ENCODE measurements at regions of chr10 and their contacts with region 1.

Region 1: GRCh38 chr10:61943674-61944410 is 42.3 kb downstream of the ARID5B start:
- DNase-seq: peak in 4 of 5 donors; percentile 56 to 68 (median 60)
- H3K4me3 ChIP-seq: peak overlapping the region in 1 of 2 donors; percentile 25
- H3K4me3 Mint-ChIP-seq: peak overlapping the region; percentile 72 to 91 (median 84)
- H3K27ac ChIP-seq: peak overlapping the region; percentile 56
- H3K27ac Mint-ChIP-seq: peak overlapping the region; percentile 89 to 98 (median 95)
- H3K4me1 ChIP-seq: peaks cover 64% of the 10 kb centered on the region
- H3K4me1 Mint-ChIP-seq: peaks cover 35 to 61% (median 48%) of the 10 kb centered on the region in 4 donors
- H3K27me3 ChIP-seq: no peaks in the 10 kb centered on the region
- H3K27me3 Mint-ChIP-seq: no peaks in the 10 kb centered on the region

Region 2: GRCh38 chr10:61733358-61733940 is 210.4 kb before region 1 on chr10:
- CTCF ChIA-PET with region 1: no interaction called
- POLR2A ChIA-PET with region 1: no interaction called
- intact Hi-C with region 1: no loop called
- DNase-seq: peak in 4 of 5 donors; percentile 4 to 11 (median 8)
- H3K4me3 ChIP-seq: no peak overlapping the region
- H3K4me3 Mint-ChIP-seq: no peak overlapping the region
- H3K27ac ChIP-seq: no peak overlapping the region
- H3K27ac Mint-ChIP-seq: no peak overlapping the region
- H3K4me1 ChIP-seq: no peaks in the 10 kb centered on the region
- H3K4me1 Mint-ChIP-seq: no peaks in the 10 kb centered on the region
- H3K27me3 ChIP-seq: peaks cover 13% of the 10 kb centered on the region
- H3K27me3 Mint-ChIP-seq: peaks cover 26 to 29% of the 10 kb centered on the region in 2 donors

Region 3: GRCh38 chr10:61961278-61961677 is 17.4 kb after region 1 on chr10:
- CTCF ChIA-PET with region 1: interaction called, 4 read pairs
- POLR2A ChIA-PET with region 1: interaction called, 15 read pairs
- intact Hi-C with region 1: no loop called
- DNase-seq: peak; percentile 46 to 54 (median 51)
- H3K4me3 ChIP-seq: no peak overlapping the region
- H3K4me3 Mint-ChIP-seq: peak overlapping the region in 7 of 8 donors; percentile 42 to 73 (median 53)
- H3K27ac ChIP-seq: no peak overlapping the region
- H3K27ac Mint-ChIP-seq: peak overlapping the region; percentile 78 to 95 (median 85)
- H3K4me1 ChIP-seq: peaks cover 68% of the 10 kb centered on the region
- H3K4me1 Mint-ChIP-seq: peaks cover 54 to 67% (median 61%) of the 10 kb centered on the region in 4 donors
- H3K27me3 ChIP-seq: no peaks in the 10 kb centered on the region
- H3K27me3 Mint-ChIP-seq: no peaks in the 10 kb centered on the region

Region 4: GRCh38 chr10:61992671-61993668 is 49.1 kb after region 1 on chr10:
- CTCF ChIA-PET with region 1: interaction called, 4 read pairs
- POLR2A ChIA-PET with region 1: interaction called, 20 read pairs
- intact Hi-C with region 1: loop called (anchors 1 kb)
- DNase-seq: peak; percentile 79 to 88 (median 84)
- H3K4me3 ChIP-seq: peak overlapping the region; percentile 9 to 39
- H3K4me3 Mint-ChIP-seq: peak overlapping the region; percentile 47 to 81 (median 74)
- H3K27ac ChIP-seq: peak overlapping the region; percentile 60
- H3K27ac Mint-ChIP-seq: peak overlapping the region; percentile 87 to 98 (median 94)
- H3K4me1 ChIP-seq: peaks cover 71% of the 10 kb centered on the region
- H3K4me1 Mint-ChIP-seq: peaks cover 52 to 72% (median 56%) of the 10 kb centered on the region in 4 donors
- H3K27me3 ChIP-seq: no peaks in the 10 kb centered on the region
- H3K27me3 Mint-ChIP-seq: peaks cover 0 to 3% of the 10 kb centered on the region in 2 donors

Region 5: DNA sequence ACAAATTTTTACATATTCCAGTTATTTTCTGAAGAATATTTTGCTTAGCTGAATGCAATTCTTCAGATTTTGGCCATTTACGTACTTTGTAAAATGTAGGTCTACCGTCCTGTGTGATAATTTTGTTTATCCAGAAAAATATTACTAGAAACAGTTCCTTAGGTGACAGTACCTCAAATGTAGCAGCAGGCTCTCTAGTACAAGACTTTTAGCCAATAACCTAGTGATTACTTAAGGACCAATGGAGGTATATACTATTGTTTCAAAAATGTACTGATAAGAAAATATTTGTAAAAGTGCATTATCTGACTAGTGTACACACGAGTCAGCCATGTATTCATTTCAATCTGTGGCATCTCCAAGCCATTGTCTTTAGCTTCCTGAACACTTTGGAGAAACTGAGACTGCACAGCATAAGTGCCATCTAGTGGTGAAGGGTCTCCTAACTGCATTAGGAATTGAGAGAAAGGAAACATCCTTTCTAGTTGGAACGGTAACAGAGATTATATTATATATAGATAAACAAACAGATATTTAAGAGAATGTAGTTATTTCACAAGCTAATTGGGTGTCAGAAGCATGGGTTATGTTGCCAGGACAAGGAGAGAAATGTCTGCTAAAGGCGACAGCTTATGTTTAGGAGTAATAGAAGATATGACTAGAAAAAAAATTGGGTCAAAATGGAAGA is 301.1 kb after region 1 on chr10:
- CTCF ChIA-PET with region 1: interaction called, 8 read pairs
- POLR2A ChIA-PET with region 1: no interaction called
- intact Hi-C with region 1: loop called (anchors 2 kb)
- DNase-seq: peak; percentile 52 to 68 (median 65)
- H3K4me3 ChIP-seq: no peak overlapping the region
- H3K4me3 Mint-ChIP-seq: peak overlapping the region in 6 of 8 donors; percentile 22 to 62 (median 42)
- H3K27ac ChIP-seq: no peak overlapping the region
- H3K27ac Mint-ChIP-seq: peak overlapping the region in 4 of 7 donors; percentile 11 to 70 (median 37)
- H3K4me1 ChIP-seq: peaks cover 37% of the 10 kb centered on the region
- H3K4me1 Mint-ChIP-seq: peaks cover 22 to 35% (median 25%) of the 10 kb centered on the region in 4 donors
- H3K27me3 ChIP-seq: no peaks in the 10 kb centered on the region
- H3K27me3 Mint-ChIP-seq: peaks cover 0 to 1% of the 10 kb centered on the region in 2 donors

Region 6: DNA sequence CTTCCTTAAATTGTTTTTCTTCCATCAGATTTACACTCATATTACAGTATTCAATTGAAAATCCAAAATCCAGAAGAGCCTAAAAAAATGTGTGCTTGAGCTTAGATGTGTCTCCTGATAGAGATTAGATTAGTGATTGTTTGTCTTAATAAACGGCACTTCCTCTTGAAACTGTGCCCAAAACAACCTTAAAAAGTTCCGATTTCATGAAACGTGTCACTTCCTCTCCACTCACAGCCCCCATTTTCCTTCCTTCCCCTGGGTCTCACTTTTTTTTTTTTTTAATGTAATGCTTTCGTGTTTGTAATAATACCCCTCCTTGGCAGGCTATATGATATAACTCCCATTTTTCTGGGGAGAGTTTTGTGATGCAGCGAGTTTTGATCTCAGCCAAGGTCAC is 745.9 kb after region 1 on chr10:
- CTCF ChIA-PET with region 1: no interaction called
- POLR2A ChIA-PET with region 1: no interaction called
- intact Hi-C with region 1: no loop called
- DNase-seq: peak in 4 of 5 donors; percentile 35 to 54 (median 49)
- H3K4me3 ChIP-seq: peak overlapping the region in 1 of 2 donors; percentile 15
- H3K4me3 Mint-ChIP-seq: peak overlapping the region; percentile 68 to 88 (median 80)
- H3K27ac ChIP-seq: peak overlapping the region; percentile 55
- H3K27ac Mint-ChIP-seq: peak overlapping the region; percentile 75 to 95 (median 90)
- H3K4me1 ChIP-seq: peaks cover 43% of the 10 kb centered on the region
- H3K4me1 Mint-ChIP-seq: peaks cover 35 to 65% (median 52%) of the 10 kb centered on the region in 4 donors
- H3K27me3 ChIP-seq: no peaks in the 10 kb centered on the region
- H3K27me3 Mint-ChIP-seq: no peaks in the 10 kb centered on the region

Region 7: DNA sequence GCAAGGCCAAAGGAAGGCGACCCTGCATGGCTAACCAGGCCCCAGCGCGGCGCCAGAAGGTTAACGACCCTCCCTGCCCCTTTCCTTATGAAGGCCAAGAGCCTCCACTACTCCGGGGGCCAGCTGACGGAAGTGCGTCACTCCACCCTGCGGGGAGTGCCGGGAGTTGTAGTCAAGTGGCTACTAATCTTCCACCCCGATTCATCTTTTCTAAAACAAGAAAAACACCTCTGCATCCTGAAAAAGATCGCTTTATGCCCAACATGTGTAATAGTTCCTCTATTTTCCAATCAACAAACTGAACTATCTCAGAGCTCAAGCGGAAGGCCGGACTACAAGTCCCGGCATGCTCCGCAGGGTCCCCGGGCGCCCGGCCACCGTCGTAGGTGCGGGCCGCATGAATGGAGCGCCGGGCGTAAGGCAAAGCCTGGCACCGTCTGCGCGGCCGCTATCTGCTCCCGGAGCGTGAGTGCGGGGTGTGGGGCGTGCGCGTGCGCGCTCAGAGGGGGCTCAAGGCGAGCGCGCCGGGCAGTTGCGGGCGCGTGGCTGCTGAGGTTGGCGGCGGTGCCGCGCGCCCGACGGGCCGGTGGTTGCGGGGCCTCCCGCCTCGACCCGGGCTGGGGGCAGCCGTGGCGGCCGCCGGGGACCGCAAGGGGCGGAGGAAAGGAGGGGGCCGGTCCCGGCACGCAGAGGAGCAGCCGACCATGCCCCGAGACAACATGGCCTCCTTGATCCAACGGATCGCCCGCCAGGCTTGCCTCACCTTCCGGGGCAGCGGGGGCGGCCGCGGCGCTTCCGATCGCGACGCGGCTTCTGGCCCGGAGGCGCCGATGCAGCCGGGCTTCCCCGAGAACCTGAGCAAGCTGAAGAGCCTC is 860.8 kb after region 1 on chr10 and contains the start of gene ADO:
- CTCF ChIA-PET with region 1: no interaction called
- POLR2A ChIA-PET with region 1: no interaction called
- intact Hi-C with region 1: loop called (anchors 1 kb)
- DNase-seq: peak; percentile 80 to 86 (median 83)
- H3K4me3 ChIP-seq: peak within 1 kb of the TSS; percentile 60 to 88
- H3K4me3 Mint-ChIP-seq: peak within 1 kb of the TSS; percentile 91 to 99 (median 96)
- H3K27ac ChIP-seq: peak within 1 kb of the TSS; percentile 83
- H3K27ac Mint-ChIP-seq: peak within 1 kb of the TSS; percentile 96 to 100 (median 99)
- H3K4me1 ChIP-seq: peaks cover 35% of the 10 kb centered on the region
- H3K4me1 Mint-ChIP-seq: peaks cover 22 to 45% (median 33%) of the 10 kb centered on the region in 4 donors
- H3K27me3 ChIP-seq: no peaks in the 10 kb centered on the region
- H3K27me3 Mint-ChIP-seq: no peaks in the 10 kb centered on the region
- total RNA-seq, gene ADO: 18.6 to 19.1 TPM